Activated T-helper 1 cell treated with anti-CD3 and anti-CD28 coated beads, Interleukin-12 subunit alpha, Interleukin-12 subunit beta, Interleukin-2, Interleukin-4 antibody, amounts not matched to agents 30 ng/mL and 10 ng/mL and 1 ng/mL, durations not matched to agents 14 hours and 24 hours and 36 hours (primary cell): ENCODE measurements at regions of chr3 and their contacts with region 1.

Region 1: DNA sequence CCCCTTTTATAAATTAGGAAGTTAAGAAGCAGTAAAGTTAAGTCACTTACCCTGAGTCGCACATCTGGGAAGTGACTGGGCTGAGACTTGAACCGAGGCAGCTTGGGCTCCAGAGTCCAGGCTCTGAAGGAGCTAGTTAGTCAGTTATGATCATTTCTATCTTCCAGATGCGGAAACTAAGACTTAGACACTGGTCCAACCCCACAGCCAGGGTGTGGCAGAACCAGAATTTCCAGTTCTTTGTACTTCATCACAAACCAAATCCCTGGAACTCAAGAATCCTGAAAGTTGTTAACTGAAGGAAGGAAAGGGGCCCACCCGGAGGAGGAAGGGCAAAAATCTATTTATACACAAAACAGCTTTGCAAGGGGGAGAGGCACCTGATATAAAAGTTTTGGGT is 389.9 kb downstream of the SHQ1 start:
- DNase-seq: no peak
- H3K4me3 Mint-ChIP-seq: no peak overlapping the region
- H3K27ac Mint-ChIP-seq: no peak overlapping the region
- H3K4me1 Mint-ChIP-seq: peaks cover 19% of the 10 kb centered on the region
- H3K27me3 Mint-ChIP-seq: peaks cover 6% of the 10 kb centered on the region

Region 2: DNA sequence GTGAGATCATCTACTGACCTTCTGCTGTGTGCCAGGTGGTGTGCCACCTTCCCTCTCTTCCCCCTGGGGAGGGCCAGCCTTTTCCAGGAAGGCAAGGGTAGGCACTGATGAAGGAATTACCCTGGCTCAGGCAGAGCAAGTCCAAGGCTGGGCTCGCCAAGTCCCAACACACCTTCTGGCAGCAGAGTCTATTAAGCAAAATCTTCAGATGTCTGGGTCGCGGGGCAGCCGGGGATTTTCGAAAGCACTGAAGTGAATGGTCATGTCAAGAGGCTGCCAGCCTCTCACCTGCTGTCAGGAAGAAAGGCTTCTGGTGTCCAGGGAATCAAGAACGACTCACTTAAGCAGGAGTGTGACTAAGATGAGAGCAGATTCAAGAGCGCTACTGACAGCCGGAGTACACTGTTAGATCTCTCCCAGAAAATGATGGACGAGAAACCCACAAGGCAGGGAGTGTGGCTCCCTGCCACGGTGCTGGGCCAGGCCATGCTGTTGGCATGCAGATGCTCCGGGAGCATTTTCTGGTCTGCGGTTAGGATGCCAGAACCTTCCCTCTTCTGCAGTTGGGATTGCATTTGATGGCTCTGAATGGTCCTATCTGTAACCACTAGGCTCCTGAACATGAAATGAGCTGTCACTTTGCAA is 89.9 kb before region 1 on chr3:
- intact Hi-C with region 1: no loop called
- DNase-seq: no peak
- H3K4me3 Mint-ChIP-seq: no peak overlapping the region
- H3K27ac Mint-ChIP-seq: no peak overlapping the region
- H3K4me1 Mint-ChIP-seq: peaks cover 6% of the 10 kb centered on the region
- H3K27me3 Mint-ChIP-seq: peaks cover under 1% of the 10 kb centered on the region

Region 3: GRCh38 chr3:72473156-72473555 is 14.8 kb after region 1 on chr3:
- intact Hi-C with region 1: loop called (anchors 1 kb)
- DNase-seq: no peak
- H3K4me3 Mint-ChIP-seq: no peak overlapping the region
- H3K27ac Mint-ChIP-seq: peak overlapping the region; percentile 57
- H3K4me1 Mint-ChIP-seq: peaks cover 31% of the 10 kb centered on the region
- H3K27me3 Mint-ChIP-seq: no peaks in the 10 kb centered on the region